Activated CD8-positive, alpha-beta T cell treated with anti-CD3 and anti-CD28 coated beads, Interleukin-2, amount 10 ng/mL, durations not matched to agents 7 days and 5 days (primary cell): ENCODE measurements at regions of chr9 and their contacts with region 1.

Region 1: DNA sequence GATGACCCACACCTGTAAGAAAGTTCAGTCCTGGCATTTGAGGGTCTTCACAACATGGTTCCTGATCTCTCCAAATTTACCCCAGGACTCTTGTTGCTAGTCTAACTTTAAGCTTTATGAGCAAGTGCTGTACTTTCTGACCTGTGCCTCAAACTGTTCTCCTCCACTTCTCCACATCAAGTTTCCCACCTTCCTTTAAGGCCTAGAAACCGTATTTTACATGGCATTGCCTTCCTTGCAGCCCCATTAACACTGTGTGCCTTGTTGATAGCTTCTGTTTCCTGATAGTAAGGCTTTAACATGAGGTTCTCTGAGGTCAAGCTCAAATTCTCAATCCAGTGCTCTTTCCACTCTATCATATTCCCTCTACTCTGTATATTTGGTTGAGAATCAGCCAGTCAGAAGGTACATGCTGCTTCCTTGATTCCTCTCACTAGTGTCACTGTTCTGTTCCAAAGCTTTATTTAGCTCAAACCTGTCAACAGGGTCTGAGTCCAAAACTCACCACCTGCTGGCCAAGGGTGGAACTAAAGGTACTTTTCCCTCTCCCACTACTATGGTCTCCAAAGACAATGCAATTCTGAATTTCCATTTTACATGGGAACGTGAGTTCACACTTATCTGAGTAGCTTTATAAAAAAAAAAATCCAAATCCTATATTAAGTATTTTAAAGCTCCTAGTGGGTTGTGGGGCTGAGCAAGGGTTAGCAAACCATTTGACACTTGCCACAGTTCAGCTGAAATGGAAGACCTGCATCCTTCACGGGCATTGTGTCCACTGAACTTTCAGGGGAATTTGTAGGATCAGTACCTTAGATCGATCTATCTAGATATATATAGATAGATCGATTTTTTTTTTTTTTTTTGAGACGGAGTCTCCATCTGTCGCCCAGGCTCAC is 21.1 kb downstream of the VCP start:
- DNase-seq: peak; percentile 66
- ATAC-seq: peak; percentile 64
- H3K4me3 Mint-ChIP-seq: no peak overlapping the region
- H3K27ac Mint-ChIP-seq: peak overlapping the region; percentile 28
- H3K4me1 Mint-ChIP-seq: no peaks in the 10 kb centered on the region
- H3K27me3 Mint-ChIP-seq: no peaks in the 10 kb centered on the region

Region 2: GRCh38 chr9:34759432-34760134 is 291.7 kb before region 1 on chr9:
- CTCF ChIA-PET with region 1: interaction called, 13 read pairs
- POLR2A ChIA-PET with region 1: no interaction called
- DNase-seq: no peak
- ATAC-seq: no peak
- H3K4me3 Mint-ChIP-seq: no peak overlapping the region
- H3K27ac Mint-ChIP-seq: no peak overlapping the region
- H3K4me1 Mint-ChIP-seq: peaks cover 8% of the 10 kb centered on the region
- H3K27me3 Mint-ChIP-seq: peaks cover 27% of the 10 kb centered on the region

Region 3: GRCh38 chr9:34989003-34989945 is 62.0 kb before region 1 on chr9 and contains the start of gene DNAJB5:
- CTCF ChIA-PET with region 1: interaction called, 24 read pairs
- POLR2A ChIA-PET with region 1: interaction called, 3 read pairs
- DNase-seq: peak; percentile 98
- ATAC-seq: peak; percentile 96
- H3K4me3 Mint-ChIP-seq: peak within 1 kb of the TSS; percentile 92
- H3K27ac Mint-ChIP-seq: peak within 1 kb of the TSS; percentile 93
- H3K4me1 Mint-ChIP-seq: peaks cover 61% of the 10 kb centered on the region
- H3K27me3 Mint-ChIP-seq: no peaks in the 10 kb centered on the region
- total RNA-seq, gene DNAJB5: 5.1 to 5.5 TPM

Region 4: GRCh38 chr9:34994260-34994899 is 56.9 kb before region 1 on chr9:
- CTCF ChIA-PET with region 1: interaction called, 17 read pairs
- POLR2A ChIA-PET with region 1: no interaction called
- DNase-seq: no peak
- ATAC-seq: no peak
- H3K4me3 Mint-ChIP-seq: no peak overlapping the region
- H3K27ac Mint-ChIP-seq: no peak overlapping the region
- H3K4me1 Mint-ChIP-seq: peaks cover 20% of the 10 kb centered on the region
- H3K27me3 Mint-ChIP-seq: no peaks in the 10 kb centered on the region

Region 5: GRCh38 chr9:35014517-35014916 is 36.8 kb before region 1 on chr9:
- CTCF ChIA-PET with region 1: interaction called, 14 read pairs
- POLR2A ChIA-PET with region 1: no interaction called
- DNase-seq: no peak
- ATAC-seq: no peak
- H3K4me3 Mint-ChIP-seq: no peak overlapping the region
- H3K27ac Mint-ChIP-seq: no peak overlapping the region
- H3K4me1 Mint-ChIP-seq: peaks cover 2% of the 10 kb centered on the region
- H3K27me3 Mint-ChIP-seq: no peaks in the 10 kb centered on the region

Region 6: DNA sequence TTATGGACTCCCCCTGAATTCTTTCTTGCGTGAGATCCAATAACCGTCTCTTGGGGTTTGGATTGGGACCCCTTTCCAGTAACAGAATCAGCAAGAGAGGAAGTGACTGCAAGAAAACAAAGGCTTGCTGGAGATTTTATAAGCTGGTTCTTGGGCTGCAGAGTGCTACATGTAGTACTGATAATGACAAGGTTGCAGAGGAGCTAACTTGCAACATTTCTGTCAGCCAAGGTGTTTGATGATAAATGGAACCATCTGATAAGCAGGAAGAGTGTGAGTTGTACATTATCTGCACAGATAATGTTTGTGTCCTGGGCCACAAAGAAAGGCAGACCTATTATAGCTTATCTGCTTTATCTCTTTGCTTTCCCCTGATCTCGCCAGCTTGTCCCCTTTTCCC is 24.6 kb before region 1 on chr9:
- CTCF ChIA-PET with region 1: interaction called, 19 read pairs
- POLR2A ChIA-PET with region 1: no interaction called
- DNase-seq: no peak
- ATAC-seq: no peak
- H3K4me3 Mint-ChIP-seq: no peak overlapping the region
- H3K27ac Mint-ChIP-seq: no peak overlapping the region
- H3K4me1 Mint-ChIP-seq: peaks cover 20% of the 10 kb centered on the region
- H3K27me3 Mint-ChIP-seq: no peaks in the 10 kb centered on the region

Region 7: DNA sequence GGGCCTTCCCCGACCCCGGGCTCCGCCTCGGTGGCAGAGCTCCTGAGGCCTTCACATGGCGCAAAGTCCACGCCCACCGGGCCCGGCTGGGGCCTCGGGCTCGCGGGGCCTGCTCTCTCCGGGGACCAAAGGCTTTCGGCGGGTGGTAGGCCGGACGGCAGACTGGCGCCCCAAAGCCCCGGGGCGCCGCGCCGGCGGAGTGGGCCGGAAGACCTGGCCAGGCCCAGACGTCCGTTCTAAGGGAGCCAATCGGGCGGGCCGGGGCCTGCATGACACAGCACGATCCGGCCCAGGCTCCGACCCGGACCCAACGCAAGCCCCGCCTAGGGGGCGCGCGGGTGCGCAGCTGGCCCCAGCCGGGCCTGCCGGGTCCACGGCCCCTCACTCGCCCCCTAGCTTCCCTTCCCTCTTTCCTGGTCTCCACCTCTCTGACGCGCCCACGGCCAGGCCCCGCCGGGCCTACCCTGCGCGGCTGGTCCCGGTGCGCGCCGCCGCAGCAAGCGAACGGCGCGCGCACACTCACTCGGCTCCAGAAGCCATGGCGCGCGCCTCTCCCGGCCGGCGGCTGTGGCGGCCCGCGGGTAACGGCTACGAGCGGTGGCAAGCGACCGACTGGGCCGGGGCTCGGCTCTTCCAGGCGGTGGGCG is 20.6 kb after region 1 on chr9:
- CTCF ChIA-PET with region 1: interaction called, 15 read pairs
- POLR2A ChIA-PET with region 1: interaction called, 7 read pairs
- DNase-seq: peak; percentile 76
- ATAC-seq: peak; percentile 66
- H3K4me3 Mint-ChIP-seq: peak overlapping the region; percentile 92
- H3K27ac Mint-ChIP-seq: peak overlapping the region; percentile 96
- H3K4me1 Mint-ChIP-seq: peaks cover 54% of the 10 kb centered on the region
- H3K27me3 Mint-ChIP-seq: no peaks in the 10 kb centered on the region

Region 8: DNA sequence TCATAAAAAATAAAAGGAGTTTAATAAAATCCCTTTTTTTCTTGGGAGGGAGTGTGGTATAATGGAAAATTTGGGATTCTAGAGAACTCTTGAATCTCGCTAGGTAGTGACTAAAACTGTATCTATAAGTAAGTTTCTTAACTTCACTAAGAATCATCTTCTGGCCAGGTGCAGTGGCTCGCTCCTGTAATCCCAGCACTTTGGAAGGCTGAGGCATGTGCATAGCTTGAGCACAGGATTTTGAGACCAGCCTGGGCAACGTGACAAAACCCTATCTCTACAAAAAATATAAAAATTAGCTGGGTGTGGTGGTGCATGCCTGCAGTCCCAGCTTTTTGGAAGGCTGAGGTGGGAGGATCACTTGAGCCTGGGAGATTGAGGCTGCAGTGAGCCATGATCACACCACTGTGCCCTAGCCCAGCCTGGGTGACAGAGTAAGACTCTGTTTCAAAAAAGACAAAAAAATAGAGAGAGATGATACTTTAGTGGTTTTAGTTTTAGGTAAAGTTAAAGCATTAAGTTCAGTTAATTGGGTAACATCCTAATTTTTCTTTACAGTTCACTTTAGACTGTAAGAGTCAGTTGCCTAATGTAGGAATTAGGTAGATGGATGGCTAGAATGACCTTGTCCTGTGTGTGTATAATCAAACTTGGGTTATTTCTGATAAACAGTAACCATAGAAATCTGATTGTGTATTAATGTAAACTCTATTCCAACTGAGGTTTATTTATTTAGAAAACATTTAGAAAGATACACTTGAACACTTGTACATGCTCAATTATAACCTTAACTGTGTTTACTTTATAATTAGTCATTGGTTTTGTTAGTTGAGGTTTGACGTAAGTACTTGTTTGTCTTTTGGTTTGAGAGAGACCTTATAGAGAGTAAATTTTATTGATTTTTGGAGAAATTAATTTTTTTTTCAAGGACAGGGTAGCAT is 128.3 kb after region 1 on chr9:
- CTCF ChIA-PET with region 1: no interaction called
- POLR2A ChIA-PET with region 1: no interaction called
- DNase-seq: no peak
- ATAC-seq: no peak
- H3K4me3 Mint-ChIP-seq: no peak overlapping the region
- H3K27ac Mint-ChIP-seq: no peak overlapping the region
- H3K4me1 Mint-ChIP-seq: no peaks in the 10 kb centered on the region
- H3K27me3 Mint-ChIP-seq: peaks cover 2% of the 10 kb centered on the region